Aorta (tissue), 5 donors: ENCODE measurements at regions of chr12 and their contacts with region 1.

Region 1: GRCh38 chr12:11486623-11487444 is 91.5 kb upstream of the PRB2 start:
- DNase-seq: peak; percentile 87 to 89
- ATAC-seq: peak; percentile 88
- H3K4me3 ChIP-seq: no peak overlapping the region
- H3K27ac ChIP-seq: no peak overlapping the region
- H3K4me1 ChIP-seq: peaks cover 0 to 5% of the 10 kb centered on the region in 2 donors
- H3K27me3 ChIP-seq: no peaks in the 10 kb centered on the region

Region 2: DNA sequence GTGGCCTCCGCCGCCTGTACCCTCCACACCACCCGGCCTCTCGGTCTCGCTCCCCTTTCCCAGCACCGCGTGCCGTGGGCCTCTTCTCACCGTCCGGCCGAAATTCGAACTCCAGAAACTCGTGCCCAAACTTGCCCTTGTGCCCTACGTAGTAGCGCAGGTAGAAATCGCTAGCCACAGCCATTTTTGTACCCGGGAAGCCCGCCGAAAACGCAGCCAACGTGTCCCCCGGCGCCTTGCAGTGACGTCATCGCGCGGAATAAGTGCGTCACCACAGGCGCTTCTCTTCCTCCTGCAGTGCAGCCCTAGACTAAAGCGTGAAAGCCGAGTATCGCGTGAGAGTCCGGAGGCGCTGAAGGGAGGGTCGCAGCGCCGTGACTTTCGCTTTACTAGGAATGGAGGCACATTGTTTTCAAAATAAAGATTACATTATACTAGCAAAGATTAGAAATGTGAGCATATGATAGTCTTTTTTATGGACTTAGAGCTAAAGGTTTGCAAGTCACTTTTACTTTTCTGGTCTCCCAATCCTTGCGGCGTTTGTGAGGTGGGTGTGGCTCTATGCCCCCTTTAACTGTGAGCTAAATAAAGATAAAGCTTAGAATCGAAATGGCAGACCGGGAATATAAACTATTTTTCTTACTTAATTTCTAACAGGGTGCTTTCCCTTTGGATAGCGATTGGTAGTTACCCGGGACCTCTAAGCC is 873.3 kb before region 1 on chr12 and contains the start of gene MAGOHB:
- intact Hi-C with region 1: loop called in 1 of 2 experiments (anchors 10 kb)
- DNase-seq: peak; percentile 97 to 99
- ATAC-seq: peak; percentile 99
- H3K4me3 ChIP-seq: peak within 1 kb of the TSS; percentile 73 to 93
- H3K27ac ChIP-seq: peak within 1 kb of the TSS; percentile 9 to 24
- H3K4me1 ChIP-seq: peaks cover 0 to 3% of the 10 kb centered on the region in 2 donors
- H3K27me3 ChIP-seq: no peaks in the 10 kb centered on the region
- total RNA-seq, gene MAGOHB: 13.6 to 18.1 TPM

Region 3: DNA sequence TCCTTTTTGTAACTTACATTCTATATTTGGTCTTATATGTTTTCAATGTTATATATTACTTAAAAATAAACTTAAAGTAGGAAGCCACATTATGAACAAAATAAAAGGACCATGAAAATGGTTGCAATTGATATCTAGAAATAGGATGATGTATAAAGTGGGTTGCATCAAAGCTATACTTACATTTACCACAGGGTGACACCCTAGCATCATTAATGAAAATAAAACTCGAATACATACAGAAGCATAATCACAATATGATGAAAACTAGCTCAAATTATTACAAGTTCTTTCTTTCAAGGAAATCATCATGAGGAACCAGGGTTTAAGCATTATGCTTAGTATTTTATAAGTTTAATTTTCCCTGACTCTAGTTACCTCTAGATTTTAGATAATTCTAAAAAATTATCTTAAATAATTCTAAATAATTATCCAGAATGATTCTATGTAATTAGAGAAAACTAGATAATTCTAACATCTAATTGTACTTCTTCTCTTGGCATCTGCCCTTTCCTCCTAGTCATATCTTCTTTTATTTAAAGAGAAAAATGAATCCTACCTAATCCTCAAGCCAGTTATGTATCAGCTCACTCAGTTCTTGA is 715.6 kb before region 1 on chr12:
- intact Hi-C with region 1: loop called (anchors 2 to 5 kb)
- DNase-seq: no peak
- ATAC-seq: no peak
- H3K4me3 ChIP-seq: no peak overlapping the region
- H3K27ac ChIP-seq: no peak overlapping the region
- H3K4me1 ChIP-seq: no peaks in the 10 kb centered on the region
- H3K27me3 ChIP-seq: no peaks in the 10 kb centered on the region

Region 4: GRCh38 chr12:11202811-11203210 is 284.0 kb before region 1 on chr12:
- intact Hi-C with region 1: loop called in 1 of 2 experiments (anchors 10 kb)
- DNase-seq: no peak
- ATAC-seq: no peak
- H3K4me3 ChIP-seq: no peak overlapping the region
- H3K27ac ChIP-seq: no peak overlapping the region
- H3K4me1 ChIP-seq: no peaks in the 10 kb centered on the region
- H3K27me3 ChIP-seq: no peaks in the 10 kb centered on the region

Region 5: GRCh38 chr12:11227373-11227772 is 259.5 kb before region 1 on chr12:
- intact Hi-C with region 1: loop called in 1 of 2 experiments (anchors 2 kb)
- DNase-seq: no peak
- ATAC-seq: no peak
- H3K4me3 ChIP-seq: no peak overlapping the region
- H3K27ac ChIP-seq: no peak overlapping the region
- H3K4me1 ChIP-seq: no peaks in the 10 kb centered on the region
- H3K27me3 ChIP-seq: no peaks in the 10 kb centered on the region